Activated T-helper 1 cell treated with anti-CD3 and anti-CD28 coated beads, Interleukin-12 subunit alpha, Interleukin-12 subunit beta, Interleukin-2, Interleukin-4 antibody, amounts not matched to agents 30 ng/mL and 10 ng/mL and 1 ng/mL, durations not matched to agents 14 hours and 24 hours and 36 hours (primary cell): ENCODE measurements at regions of chr13 and their contacts with region 1.

Region 1: GRCh38 chr13:35157143-35157755 is 215.2 kb downstream of the NBEA start:
- DNase-seq: no peak
- H3K4me3 Mint-ChIP-seq: no peak overlapping the region
- H3K27ac Mint-ChIP-seq: no peak overlapping the region
- H3K4me1 Mint-ChIP-seq: peaks cover 12% of the 10 kb centered on the region
- H3K27me3 Mint-ChIP-seq: no peaks in the 10 kb centered on the region

Region 2: GRCh38 chr13:33931397-33932311 is 1225.6 kb before region 1 on chr13:
- intact Hi-C with region 1: loop called (anchors 1 kb)
- DNase-seq: no peak
- H3K4me3 Mint-ChIP-seq: no peak overlapping the region
- H3K27ac Mint-ChIP-seq: no peak overlapping the region
- H3K4me1 Mint-ChIP-seq: no peaks in the 10 kb centered on the region
- H3K27me3 Mint-ChIP-seq: peaks cover 2% of the 10 kb centered on the region

Region 3: GRCh38 chr13:35255241-35255640 is 98.0 kb after region 1 on chr13:
- intact Hi-C with region 1: no loop called
- DNase-seq: no peak
- H3K4me3 Mint-ChIP-seq: no peak overlapping the region
- H3K27ac Mint-ChIP-seq: no peak overlapping the region
- H3K4me1 Mint-ChIP-seq: no peaks in the 10 kb centered on the region
- H3K27me3 Mint-ChIP-seq: no peaks in the 10 kb centered on the region

Region 4: DNA sequence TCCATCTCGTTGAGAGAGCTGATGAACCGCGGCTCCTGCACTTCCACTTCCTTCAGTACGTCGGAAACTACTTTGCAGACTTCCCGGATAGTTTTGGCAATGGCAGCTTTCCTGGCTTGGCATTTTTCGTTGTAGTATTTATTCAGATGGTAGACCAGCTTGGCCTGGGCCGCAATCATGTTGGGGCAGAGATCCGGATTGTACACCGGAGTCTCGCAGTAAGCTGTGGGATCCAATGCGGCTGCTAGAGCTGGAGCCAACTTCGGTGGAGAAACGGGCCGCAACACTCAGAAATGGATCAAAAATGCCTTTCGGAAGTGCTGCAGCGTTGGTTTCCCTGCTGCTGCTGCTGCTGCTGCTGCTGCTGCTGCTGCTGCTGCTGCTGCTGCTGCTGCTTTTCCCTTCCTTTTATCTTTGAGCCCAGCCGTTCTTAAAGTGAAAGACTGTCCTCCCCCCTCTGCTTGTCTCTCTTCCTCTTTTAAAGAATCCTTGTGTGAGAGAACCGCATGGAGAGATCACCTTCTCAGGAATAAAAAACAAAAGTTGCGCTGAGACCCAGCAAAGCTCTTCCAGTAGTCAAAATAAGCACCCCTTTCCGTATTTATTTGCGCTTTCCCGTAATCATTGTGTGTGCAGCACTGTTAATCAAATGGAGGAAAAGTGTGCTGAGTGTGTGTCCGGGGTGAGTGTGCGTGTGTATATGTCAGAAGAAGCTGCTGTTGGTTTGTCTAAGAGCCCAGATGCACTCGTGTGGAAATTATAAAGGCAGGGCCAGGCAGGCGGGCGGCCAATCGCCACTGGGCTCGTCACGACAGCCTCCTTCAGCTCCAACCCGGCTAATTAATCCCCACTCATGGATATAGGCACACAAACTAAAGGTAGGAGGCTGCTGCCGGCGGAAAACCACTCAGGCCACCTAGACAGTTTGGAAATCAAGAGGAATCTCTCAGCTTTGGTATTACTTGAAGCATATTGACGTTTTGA is 319.0 kb after region 1 on chr13 and contains the start of gene MAB21L1:
- intact Hi-C with region 1: no loop called
- DNase-seq: no peak
- H3K4me3 Mint-ChIP-seq: peak within 1 kb of the TSS; percentile 81
- H3K27ac Mint-ChIP-seq: no peak within 1 kb of the TSS
- H3K4me1 Mint-ChIP-seq: peaks cover 33% of the 10 kb centered on the region
- H3K27me3 Mint-ChIP-seq: peaks cover 78% of the 10 kb centered on the region
- total RNA-seq, gene MAB21L1: not detected in 2 replicates